ENCODE measurements at regions of chr17 and their contacts with region 1.

Region 1: GRCh38 chr17:19648475-19649406 is at the start of gene ALDH3A2:
- DNase-seq: peak; percentile 91
- H3K4me3 Mint-ChIP-seq: peak within 1 kb of the TSS; percentile 89
- H3K27ac Mint-ChIP-seq: peak within 1 kb of the TSS; percentile 86
- H3K4me1 Mint-ChIP-seq: peaks cover 29% of the 10 kb centered on the region
- H3K27me3 Mint-ChIP-seq: peaks cover 10% of the 10 kb centered on the region
- total RNA-seq, gene ALDH3A2: 36.7 and 36.9 TPM in 2 replicates

Region 2: DNA sequence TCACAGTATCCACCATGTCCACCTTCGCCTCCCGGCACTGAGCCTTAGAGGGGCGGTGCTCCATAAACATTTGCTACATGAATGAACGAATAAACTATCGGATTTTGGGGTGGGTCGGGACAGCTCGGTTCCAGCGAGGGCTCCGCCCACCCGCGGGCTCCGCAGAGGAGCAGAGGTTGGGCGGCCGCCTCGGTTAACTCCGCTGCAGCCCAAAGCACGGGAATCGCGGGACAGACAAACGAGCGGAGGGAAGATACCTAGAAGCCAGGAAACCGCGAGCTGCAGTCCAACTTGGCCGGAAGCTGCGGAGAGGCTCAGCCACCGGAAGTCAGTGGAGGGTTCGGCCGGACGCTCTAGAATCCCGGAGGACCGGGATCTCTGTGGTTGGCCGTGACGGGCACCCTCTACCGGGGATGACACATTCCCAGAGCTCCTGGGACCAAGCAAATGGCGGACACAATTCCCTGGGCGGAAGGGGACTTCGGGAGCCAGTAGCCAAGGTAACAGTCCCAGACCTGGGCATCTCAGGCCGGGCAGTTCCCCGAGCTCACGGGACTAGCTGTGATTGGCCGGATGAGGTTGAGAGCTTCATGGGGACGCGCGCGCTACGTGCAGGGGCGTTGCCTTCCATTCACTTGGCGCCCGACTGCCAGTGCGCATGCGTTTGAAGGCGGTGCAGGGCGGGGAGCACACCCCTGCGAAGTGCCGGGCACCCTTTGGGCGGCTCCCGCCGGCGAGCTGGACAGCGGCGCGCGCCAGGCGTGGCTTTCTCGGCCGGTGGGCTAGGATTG is 270.9 kb before region 1 on chr17:
- intact Hi-C with region 1: loop called (anchors 10 kb)
- DNase-seq: peak; percentile 98
- H3K4me3 Mint-ChIP-seq: peak overlapping the region; percentile 98
- H3K27ac Mint-ChIP-seq: peak overlapping the region; percentile 97
- H3K4me1 Mint-ChIP-seq: peaks cover 21% of the 10 kb centered on the region
- H3K27me3 Mint-ChIP-seq: no peaks in the 10 kb centered on the region

Region 3: GRCh38 chr17:19507775-19508576 is 140.8 kb before region 1 on chr17:
- intact Hi-C with region 1: loop called (anchors 2 kb)
- DNase-seq: peak; percentile 75
- H3K4me3 Mint-ChIP-seq: peak overlapping the region; percentile 88
- H3K27ac Mint-ChIP-seq: peak overlapping the region; percentile 82
- H3K4me1 Mint-ChIP-seq: peaks cover 7% of the 10 kb centered on the region
- H3K27me3 Mint-ChIP-seq: peaks cover 22% of the 10 kb centered on the region

Region 4: GRCh38 chr17:19513897-19514488 is 134.7 kb before region 1 on chr17:
- intact Hi-C with region 1: loop called (anchors 2 kb)
- DNase-seq: peak; percentile 47
- H3K4me3 Mint-ChIP-seq: no peak overlapping the region
- H3K27ac Mint-ChIP-seq: no peak overlapping the region
- H3K4me1 Mint-ChIP-seq: peaks cover 5% of the 10 kb centered on the region
- H3K27me3 Mint-ChIP-seq: peaks cover 13% of the 10 kb centered on the region

Region 5: GRCh38 chr17:19630661-19631060 is 18.1 kb before region 1 on chr17:
- intact Hi-C with region 1: no loop called
- DNase-seq: no peak
- H3K4me3 Mint-ChIP-seq: no peak overlapping the region
- H3K27ac Mint-ChIP-seq: no peak overlapping the region
- H3K4me1 Mint-ChIP-seq: no peaks in the 10 kb centered on the region
- H3K27me3 Mint-ChIP-seq: peaks cover 8% of the 10 kb centered on the region

Region 6: GRCh38 chr17:19766422-19767270 is 117.9 kb after region 1 on chr17:
- intact Hi-C with region 1: loop called (anchors 10 kb)
- DNase-seq: peak; percentile 61
- H3K4me3 Mint-ChIP-seq: no peak overlapping the region
- H3K27ac Mint-ChIP-seq: no peak overlapping the region
- H3K4me1 Mint-ChIP-seq: peaks cover 8% of the 10 kb centered on the region
- H3K27me3 Mint-ChIP-seq: no peaks in the 10 kb centered on the region